Activated naive CD4-positive, alpha-beta T cell treated with anti-CD3 and anti-CD28 coated beads for 36 hours (primary cell): ENCODE measurements at regions of chr9 and their contacts with region 1.

Region 1: DNA sequence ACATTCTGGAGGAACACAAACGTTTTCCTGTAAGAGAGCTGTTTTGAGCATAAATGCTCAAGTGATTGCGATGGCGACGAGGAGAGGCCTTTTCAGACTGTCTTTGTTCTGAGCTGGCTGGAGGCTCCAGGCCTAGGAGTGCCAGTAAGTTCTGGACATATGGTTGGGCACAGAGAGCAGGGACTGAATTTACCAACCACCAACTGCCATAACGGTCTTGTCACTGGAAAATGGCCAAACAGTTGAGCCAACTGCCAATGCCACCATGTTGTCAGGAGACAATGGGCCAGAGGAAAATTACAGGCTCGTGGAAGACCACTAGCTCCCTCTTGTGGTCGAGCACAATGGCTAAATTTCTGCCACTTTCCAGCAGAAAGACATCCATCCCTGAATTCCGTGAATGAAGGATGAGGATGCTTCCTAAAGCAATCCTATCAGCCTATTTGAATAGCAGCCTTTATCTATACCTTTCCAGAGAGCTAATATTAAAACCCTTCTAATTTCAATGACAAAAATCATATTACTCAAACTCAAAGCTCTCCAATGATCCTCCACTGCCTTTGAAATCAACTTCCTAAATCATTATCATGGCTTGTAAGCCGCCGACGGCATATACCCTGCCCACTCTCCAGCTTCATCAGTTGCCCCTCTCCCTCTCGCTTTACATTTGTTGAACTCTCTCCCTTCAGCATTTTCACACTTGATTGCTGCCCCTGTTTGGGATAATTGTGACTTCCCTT is 66.9 kb upstream of the GLIS3 start:
- DNase-seq: peak; percentile 60
- H3K4me3 Mint-ChIP-seq: no peak overlapping the region
- H3K27ac Mint-ChIP-seq: no peak overlapping the region
- H3K4me1 Mint-ChIP-seq: peaks cover 3% of the 10 kb centered on the region
- H3K27me3 Mint-ChIP-seq: no peaks in the 10 kb centered on the region

Region 2: DNA sequence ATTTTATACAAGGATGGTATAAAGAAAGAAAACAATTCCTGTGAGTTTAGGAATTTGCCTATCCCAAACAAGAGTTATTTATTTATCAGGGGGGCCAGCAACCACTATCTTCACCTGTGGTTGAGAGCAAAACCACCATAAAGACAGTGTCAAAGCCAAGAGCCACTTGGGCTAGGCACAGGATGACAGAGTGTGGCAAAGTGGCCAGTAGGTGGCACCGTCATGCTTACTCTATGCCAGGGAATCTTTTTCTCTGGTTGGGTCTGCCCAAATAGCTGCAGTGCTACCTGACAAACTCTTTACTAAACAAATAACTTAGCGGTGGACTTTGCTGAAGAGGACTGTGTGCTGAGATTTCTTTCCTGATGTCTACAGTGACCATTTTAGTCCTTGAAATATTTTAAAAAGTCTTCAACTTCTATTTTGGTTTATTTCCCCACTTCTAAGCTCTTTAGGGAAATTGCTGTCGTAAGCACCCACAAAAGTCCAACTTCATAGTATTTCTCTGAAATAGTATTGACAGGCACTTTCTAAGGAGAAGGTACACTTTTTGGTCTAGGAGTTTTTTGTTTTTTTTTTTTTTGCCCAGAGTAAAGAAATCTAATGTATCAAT is 1126.0 kb before region 1 on chr9:
- CTCF ChIA-PET with region 1: no interaction called
- intact Hi-C with region 1: loop called (anchors 5 kb)
- DNase-seq: peak; percentile 85
- H3K4me3 Mint-ChIP-seq: no peak overlapping the region
- H3K27ac Mint-ChIP-seq: no peak overlapping the region
- H3K4me1 Mint-ChIP-seq: peaks cover 7% of the 10 kb centered on the region
- H3K27me3 Mint-ChIP-seq: no peaks in the 10 kb centered on the region

Region 3: GRCh38 chr9:3458806-3459475 is 907.8 kb before region 1 on chr9:
- CTCF ChIA-PET with region 1: no interaction called
- intact Hi-C with region 1: no loop called
- DNase-seq: no peak
- H3K4me3 Mint-ChIP-seq: no peak overlapping the region
- H3K27ac Mint-ChIP-seq: no peak overlapping the region
- H3K4me1 Mint-ChIP-seq: peaks cover 5% of the 10 kb centered on the region
- H3K27me3 Mint-ChIP-seq: no peaks in the 10 kb centered on the region

Region 4: DNA sequence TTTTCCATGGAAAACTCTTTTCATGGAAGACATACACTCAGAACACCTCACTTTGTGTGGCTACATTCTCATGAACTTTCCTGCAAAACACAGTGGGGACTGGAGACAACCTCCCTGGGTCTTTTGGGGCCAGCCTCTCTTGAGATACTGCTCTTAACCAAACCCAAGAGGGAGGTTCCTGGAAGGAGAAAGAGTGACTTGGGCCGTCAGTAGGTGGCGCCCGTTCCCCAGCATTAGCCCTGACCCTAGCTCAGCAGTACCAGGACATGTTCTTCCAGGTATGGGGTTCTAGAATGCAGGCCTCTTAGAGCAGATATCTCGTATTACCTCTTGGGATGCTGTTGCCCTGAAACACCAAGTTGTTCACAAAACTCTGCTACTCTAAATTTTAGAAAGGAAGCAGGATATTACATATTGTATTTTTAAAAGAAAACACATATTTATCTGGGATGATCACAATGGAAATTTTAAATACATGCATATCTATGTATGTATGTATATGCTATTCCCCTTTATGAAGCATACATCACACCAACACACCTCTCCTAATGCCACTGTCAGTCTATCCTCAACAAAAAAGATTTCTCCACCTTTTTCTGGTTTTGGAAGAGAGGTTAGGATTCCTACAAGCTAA is 51.1 kb before region 1 on chr9:
- CTCF ChIA-PET with region 1: interaction called, 106 read pairs
- intact Hi-C with region 1: loop called (anchors 1 kb)
- DNase-seq: peak; percentile 89
- H3K4me3 Mint-ChIP-seq: no peak overlapping the region
- H3K27ac Mint-ChIP-seq: no peak overlapping the region
- H3K4me1 Mint-ChIP-seq: peaks cover 2% of the 10 kb centered on the region
- H3K27me3 Mint-ChIP-seq: no peaks in the 10 kb centered on the region

Region 5: DNA sequence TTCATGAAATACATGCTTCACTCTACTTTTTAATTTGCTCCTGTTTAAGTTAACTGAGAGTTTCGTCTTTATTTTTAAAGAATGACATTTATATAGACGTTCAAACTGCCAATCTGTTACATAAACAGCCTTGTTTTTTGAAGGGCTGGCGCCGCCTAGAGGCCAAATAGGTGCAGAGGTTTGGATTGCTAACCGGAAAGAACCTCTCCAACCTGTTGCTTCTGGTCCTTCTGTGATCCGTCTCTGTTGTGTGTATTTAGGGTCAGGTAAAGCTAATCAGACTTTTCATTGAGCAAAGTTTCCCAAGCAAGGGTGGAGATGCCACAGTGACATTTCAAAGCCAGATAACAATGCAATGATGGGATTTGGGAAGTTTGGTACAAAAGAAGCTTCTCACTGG is 27.4 kb before region 1 on chr9:
- CTCF ChIA-PET with region 1: interaction called, 28 read pairs
- intact Hi-C with region 1: no loop called
- DNase-seq: peak; percentile 96
- H3K4me3 Mint-ChIP-seq: peak overlapping the region; percentile 51
- H3K27ac Mint-ChIP-seq: peak overlapping the region; percentile 69
- H3K4me1 Mint-ChIP-seq: peaks cover 10% of the 10 kb centered on the region
- H3K27me3 Mint-ChIP-seq: no peaks in the 10 kb centered on the region

Region 6: GRCh38 chr9:4353236-4353635 is 13.5 kb before region 1 on chr9:
- CTCF ChIA-PET with region 1: interaction called, 22 read pairs
- intact Hi-C with region 1: no loop called
- DNase-seq: no peak
- H3K4me3 Mint-ChIP-seq: no peak overlapping the region
- H3K27ac Mint-ChIP-seq: no peak overlapping the region
- H3K4me1 Mint-ChIP-seq: no peaks in the 10 kb centered on the region
- H3K27me3 Mint-ChIP-seq: no peaks in the 10 kb centered on the region

Region 7: GRCh38 chr9:4382722-4383317 is 16.1 kb after region 1 on chr9:
- CTCF ChIA-PET with region 1: no interaction called
- intact Hi-C with region 1: no loop called
- DNase-seq: peak; percentile 21
- H3K4me3 Mint-ChIP-seq: no peak overlapping the region
- H3K27ac Mint-ChIP-seq: no peak overlapping the region
- H3K4me1 Mint-ChIP-seq: peaks cover 1% of the 10 kb centered on the region
- H3K27me3 Mint-ChIP-seq: no peaks in the 10 kb centered on the region